HEK293 (cell line): ENCODE measurements at regions of chr1 and their contacts with region 1.

Region 1: DNA sequence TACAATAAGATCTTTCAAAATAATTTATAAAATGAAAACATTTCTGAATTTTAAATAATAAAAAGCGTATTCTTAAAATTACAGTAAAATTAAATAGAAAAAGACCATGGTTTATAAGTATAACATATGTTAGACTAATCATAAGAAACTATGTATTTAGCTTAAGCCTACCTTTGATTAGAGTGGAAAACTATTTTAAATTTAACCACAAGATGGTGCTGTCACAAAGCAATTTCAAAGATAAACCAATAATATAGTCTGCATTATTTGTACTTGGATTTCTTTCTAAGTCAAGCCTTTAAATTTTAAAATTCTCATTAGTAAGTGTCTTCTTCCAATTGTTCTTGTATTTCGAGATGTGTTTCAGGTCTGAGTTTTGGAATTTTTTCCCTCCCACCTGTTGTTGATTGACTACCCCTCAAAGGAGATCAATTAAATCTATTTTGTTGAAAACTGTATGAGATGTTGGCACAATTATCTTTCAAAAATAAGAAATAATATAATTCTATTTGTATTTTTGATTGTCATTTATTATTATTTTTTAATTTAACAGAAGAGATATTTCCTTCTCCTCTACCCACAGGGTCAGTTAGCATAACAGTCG is 459.8 kb downstream of the KCNT2 start:
- H3K4me3 ChIP-seq: no peak overlapping the region
- H3K27ac ChIP-seq: no peak overlapping the region
- H3K4me1 ChIP-seq: no peaks in the 10 kb centered on the region
- CTCF ChIP-seq: 0 out of 2 replicates have a peak, but pooled peaks have one; percentile 26

Region 2: GRCh38 chr1:196309386-196309785 is 160.9 kb after region 1 on chr1:
- CTCF ChIA-PET with region 1: interaction called, 12 read pairs
- POLR2A ChIA-PET with region 1: no interaction called
- H3K4me3 ChIP-seq: no peak overlapping the region
- H3K27ac ChIP-seq: no peak overlapping the region
- H3K4me1 ChIP-seq: no peaks in the 10 kb centered on the region
- CTCF ChIP-seq: no peak

Region 3: DNA sequence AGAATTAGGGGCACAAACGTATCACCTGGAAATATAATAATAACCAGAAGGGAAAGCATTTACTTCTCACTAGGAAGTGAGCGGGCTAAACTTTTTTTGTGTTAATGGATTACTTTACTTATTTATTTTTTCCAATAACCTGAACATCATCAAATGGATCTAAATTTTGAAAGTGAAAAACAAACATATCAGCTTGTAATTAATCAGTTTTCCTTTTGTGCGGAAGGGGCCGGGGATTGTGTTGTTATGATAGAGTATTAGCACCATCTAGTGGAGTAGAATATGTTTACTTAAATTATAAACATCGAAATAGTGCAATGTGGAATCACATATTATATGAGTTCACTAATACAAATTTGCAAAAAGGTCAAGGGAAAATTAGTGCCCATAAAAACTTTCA is 512.4 kb after region 1 on chr1:
- CTCF ChIA-PET with region 1: interaction called, 21 read pairs
- POLR2A ChIA-PET with region 1: no interaction called
- H3K4me3 ChIP-seq: no peak overlapping the region
- H3K27ac ChIP-seq: no peak overlapping the region
- H3K4me1 ChIP-seq: no peaks in the 10 kb centered on the region
- CTCF ChIP-seq: 0 out of 2 replicates have a peak, but pooled peaks have one; percentile 11